Endothelial cell of umbilical vein (primary cell): ENCODE measurements at regions of chr15 and their contacts with region 1.

Region 1: GRCh38 chr15:72155635-72156616 is 37.7 kb downstream of the SENP8 start:
- DNase-seq: peak; percentile 83
- H3K4me3 ChIP-seq: peak overlapping the region in 2 of 3 experiments; percentile 36 to 54
- H3K27ac ChIP-seq: no peak overlapping the region
- H3K4me1 ChIP-seq: peaks cover 20% of the 10 kb centered on the region
- H3K27me3 ChIP-seq: no peaks in the 10 kb centered on the region
- CTCF ChIP-seq: peak; percentile 80 to 92
- POLR2A ChIP-seq: no peak

Region 2: DNA sequence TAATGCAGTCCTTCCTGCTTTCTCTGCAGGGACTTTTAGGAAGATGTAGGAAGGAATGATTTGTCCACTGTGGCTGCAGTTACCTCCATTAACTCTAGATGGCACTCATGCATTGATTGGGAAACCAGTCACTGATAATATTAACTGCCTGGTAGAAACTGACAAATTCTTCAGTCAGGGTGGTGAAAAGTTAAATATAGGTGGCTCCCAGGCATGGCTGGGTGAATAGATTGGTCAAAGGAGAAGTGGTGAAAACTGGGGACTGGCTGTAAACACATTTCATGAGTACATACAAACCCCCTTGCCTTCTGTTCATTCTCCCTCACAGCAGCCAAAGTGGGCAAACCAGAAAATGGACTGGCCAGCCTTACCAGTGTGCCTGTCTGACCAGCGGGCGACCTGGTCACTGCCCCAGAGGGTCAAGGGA is 707.2 kb before region 1 on chr15:
- CTCF ChIA-PET with region 1: interaction called, 7 read pairs
- POLR2A ChIA-PET with region 1: no interaction called
- dilution Hi-C with region 1: no loop called
- intact Hi-C with region 1: loop called (anchors 2 kb)
- DNase-seq: peak; percentile 87
- H3K4me3 ChIP-seq: no peak overlapping the region
- H3K27ac ChIP-seq: no peak overlapping the region
- H3K4me1 ChIP-seq: peaks cover 21% of the 10 kb centered on the region
- H3K27me3 ChIP-seq: no peaks in the 10 kb centered on the region
- CTCF ChIP-seq: peak; percentile 73 to 87
- POLR2A ChIP-seq: no peak

Region 3: DNA sequence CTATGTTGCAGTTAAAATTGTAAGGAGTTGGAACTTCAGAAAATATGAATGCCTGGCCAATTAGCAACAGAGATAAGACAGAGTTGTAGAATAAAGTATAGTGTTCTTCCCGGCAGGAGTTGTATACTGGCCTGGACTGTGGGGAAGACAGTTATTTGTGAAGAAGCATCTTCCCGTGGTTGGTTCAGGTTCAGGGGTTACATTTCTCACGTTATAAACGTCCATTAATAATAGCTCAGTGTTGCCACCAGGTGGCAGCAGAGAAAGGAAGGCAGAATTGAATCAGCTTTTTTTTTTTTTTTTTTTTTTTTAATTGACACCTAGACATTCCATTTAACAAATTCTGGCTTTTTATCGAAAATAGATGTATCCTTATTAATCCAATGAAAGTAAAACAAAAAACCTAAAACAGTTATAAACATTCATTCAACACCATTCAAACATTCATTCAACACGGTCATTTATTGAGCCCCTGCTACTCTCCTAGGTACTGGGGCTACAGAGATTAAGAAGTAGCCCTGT is 412.0 kb before region 1 on chr15:
- CTCF ChIA-PET with region 1: interaction called, 131 read pairs
- POLR2A ChIA-PET with region 1: interaction called, 4 read pairs
- dilution Hi-C with region 1: no loop called
- intact Hi-C with region 1: loop called (anchors 1 kb)
- DNase-seq: peak; percentile 53
- H3K4me3 ChIP-seq: no peak overlapping the region
- H3K27ac ChIP-seq: no peak overlapping the region
- H3K4me1 ChIP-seq: peaks cover 19% of the 10 kb centered on the region
- H3K27me3 ChIP-seq: no peaks in the 10 kb centered on the region
- CTCF ChIP-seq: peak; percentile 55 to 59
- POLR2A ChIP-seq: no peak

Region 4: DNA sequence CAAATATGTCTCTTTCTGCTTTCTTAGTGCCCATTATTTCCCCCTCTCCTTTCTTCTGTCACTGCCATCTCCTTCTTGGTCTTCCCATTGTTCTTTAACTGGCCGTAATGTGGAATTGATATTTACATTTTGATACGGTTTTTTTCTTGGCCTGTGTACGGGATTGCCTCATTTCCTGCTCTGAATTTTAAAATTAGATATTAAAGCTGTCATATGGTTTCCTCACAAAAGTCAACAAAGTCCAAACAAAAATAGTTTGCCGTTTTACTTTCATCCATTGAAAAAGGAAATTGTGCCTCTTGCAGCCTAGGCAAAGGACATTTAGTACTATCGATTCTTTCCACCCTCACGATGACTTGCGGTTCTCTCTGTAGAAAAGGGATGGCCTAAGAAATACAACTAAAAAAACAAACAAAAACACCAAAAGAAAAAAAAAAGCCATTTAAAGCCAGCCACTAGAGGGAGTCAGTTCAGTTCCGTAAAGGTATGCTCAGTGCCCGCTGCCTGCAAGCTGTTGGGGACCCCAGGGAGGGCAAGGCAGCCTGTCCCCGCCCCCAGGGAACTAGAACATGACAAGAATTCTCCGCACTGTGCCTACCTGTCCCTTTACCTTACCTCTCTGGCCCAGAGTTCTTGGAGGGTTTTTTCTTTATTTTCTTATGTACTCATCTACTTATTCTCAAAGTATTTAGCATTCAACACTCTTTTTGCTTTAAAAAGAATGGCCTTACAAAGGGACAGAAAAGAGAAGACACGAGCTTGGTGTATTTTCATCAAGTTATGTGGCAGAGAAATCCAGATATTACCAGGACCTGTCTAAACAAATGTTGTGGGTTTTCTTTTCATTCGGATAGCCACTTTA is 375.6 kb before region 1 on chr15:
- CTCF ChIA-PET with region 1: interaction called, 14 read pairs
- POLR2A ChIA-PET with region 1: no interaction called
- dilution Hi-C with region 1: no loop called
- intact Hi-C with region 1: loop called (anchors 1 kb)
- DNase-seq: peak; percentile 84
- H3K4me3 ChIP-seq: peak overlapping the region in 1 of 3 experiments; percentile 51
- H3K27ac ChIP-seq: peak overlapping the region; percentile 86
- H3K4me1 ChIP-seq: peaks cover 19% of the 10 kb centered on the region
- H3K27me3 ChIP-seq: no peaks in the 10 kb centered on the region
- CTCF ChIP-seq: peak; percentile 76 to 77
- POLR2A ChIP-seq: no peak

Region 5: GRCh38 chr15:72063186-72063585 is 92.7 kb before region 1 on chr15:
- CTCF ChIA-PET with region 1: no interaction called
- POLR2A ChIA-PET with region 1: no interaction called
- dilution Hi-C with region 1: no loop called
- intact Hi-C with region 1: no loop called
- DNase-seq: no peak
- H3K4me3 ChIP-seq: no peak overlapping the region
- H3K27ac ChIP-seq: no peak overlapping the region
- H3K4me1 ChIP-seq: peaks cover 3% of the 10 kb centered on the region
- H3K27me3 ChIP-seq: no peaks in the 10 kb centered on the region
- CTCF ChIP-seq: no peak
- POLR2A ChIP-seq: no peak

Region 6: GRCh38 chr15:72117486-72118399 is 38.2 kb before region 1 on chr15 and contains the start of gene MYO9A:
- CTCF ChIA-PET with region 1: interaction called, 5 read pairs
- POLR2A ChIA-PET with region 1: no interaction called
- dilution Hi-C with region 1: no loop called
- intact Hi-C with region 1: loop called (anchors 1 kb)
- DNase-seq: peak; percentile 99
- H3K4me3 ChIP-seq: peak within 1 kb of the TSS; percentile 62 to 93 (median 84)
- H3K27ac ChIP-seq: peak within 1 kb of the TSS; percentile 90
- H3K4me1 ChIP-seq: peaks cover 18% of the 10 kb centered on the region
- H3K27me3 ChIP-seq: no peaks in the 10 kb centered on the region
- CTCF ChIP-seq: peak in 1 of 2 donors; percentile 13
- POLR2A ChIP-seq: peak; percentile 55
- total RNA-seq, gene MYO9A: 30.3 and 30.6 TPM in 2 replicates

Region 7: GRCh38 chr15:72169322-72170228 is 13.6 kb after region 1 on chr15:
- CTCF ChIA-PET with region 1: interaction called, 11 read pairs
- POLR2A ChIA-PET with region 1: interaction called, 14 read pairs
- dilution Hi-C with region 1: no loop called
- intact Hi-C with region 1: no loop called
- DNase-seq: no peak
- H3K4me3 ChIP-seq: no peak overlapping the region
- H3K27ac ChIP-seq: no peak overlapping the region
- H3K4me1 ChIP-seq: no peaks in the 10 kb centered on the region
- H3K27me3 ChIP-seq: peaks cover 0 to 7% of the 10 kb centered on the region in 2 experiments
- CTCF ChIP-seq: no peak
- POLR2A ChIP-seq: no peak

Region 8: DNA sequence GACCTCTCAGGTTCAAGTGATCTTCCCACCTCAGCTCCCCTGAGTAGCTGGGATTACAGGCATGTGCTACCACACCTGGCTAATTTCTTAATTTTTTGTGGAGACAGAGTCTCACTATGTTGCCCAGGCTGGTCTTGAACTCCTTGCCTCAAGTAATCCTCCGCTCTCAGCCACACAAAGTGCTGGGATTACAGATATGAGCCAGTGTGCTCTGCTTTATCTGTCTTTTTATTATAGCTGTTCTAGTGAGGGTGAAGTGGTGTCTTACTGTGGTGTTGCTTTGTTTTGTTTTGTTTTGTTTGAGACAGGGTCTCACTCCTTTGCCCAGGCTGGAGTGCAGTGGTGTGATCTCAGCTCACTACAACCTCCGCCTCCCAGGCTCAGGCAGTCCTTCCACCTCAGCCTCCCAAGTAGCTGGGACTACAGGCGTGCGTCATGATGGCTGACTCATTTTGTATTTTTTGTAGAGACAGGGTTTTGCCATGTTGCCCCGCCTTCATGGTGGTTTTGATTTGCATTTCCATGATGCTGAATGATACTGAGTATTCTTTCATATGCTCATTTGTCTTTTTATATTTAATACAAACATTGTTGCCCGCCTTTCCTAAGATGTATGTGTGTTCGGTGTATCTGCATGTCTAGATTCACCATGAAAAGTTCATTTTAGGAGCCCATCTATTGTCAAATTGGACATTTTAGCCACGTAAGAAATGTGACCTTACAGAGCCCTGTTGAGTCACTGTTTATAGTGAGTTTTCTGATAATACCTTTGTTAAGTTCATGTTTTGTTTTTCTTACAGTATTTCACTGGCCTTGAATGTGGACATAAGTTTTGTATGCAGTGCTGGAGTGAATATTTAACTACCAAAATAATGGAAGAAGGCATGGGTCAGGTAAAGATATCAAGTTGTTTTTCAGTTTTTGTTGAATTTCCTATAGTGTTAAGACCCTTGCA is 398.8 kb after region 1 on chr15:
- CTCF ChIA-PET with region 1: no interaction called
- POLR2A ChIA-PET with region 1: no interaction called
- dilution Hi-C with region 1: no loop called
- intact Hi-C with region 1: no loop called
- DNase-seq: peak; percentile 67
- H3K4me3 ChIP-seq: no peak overlapping the region
- H3K27ac ChIP-seq: peak overlapping the region; percentile 22
- H3K4me1 ChIP-seq: peaks cover 14% of the 10 kb centered on the region
- H3K27me3 ChIP-seq: no peaks in the 10 kb centered on the region
- CTCF ChIP-seq: no peak
- POLR2A ChIP-seq: no peak

Region 9: GRCh38 chr15:73996939-73997338 is 1841.0 kb after region 1 on chr15:
- CTCF ChIA-PET with region 1: no interaction called
- POLR2A ChIA-PET with region 1: no interaction called
- dilution Hi-C with region 1: no loop called
- intact Hi-C with region 1: no loop called
- DNase-seq: peak; percentile 85
- H3K4me3 ChIP-seq: peak overlapping the region; percentile 35 to 96 (median 92)
- H3K27ac ChIP-seq: peak overlapping the region; percentile 53
- H3K4me1 ChIP-seq: peaks cover 20% of the 10 kb centered on the region
- H3K27me3 ChIP-seq: no peaks in the 10 kb centered on the region
- CTCF ChIP-seq: no peak
- POLR2A ChIP-seq: peak; percentile 49